Common myeloid progenitor, CD34-positive (primary cell): ENCODE measurements at regions of chr2 and their contacts with region 1.

Region 1: DNA sequence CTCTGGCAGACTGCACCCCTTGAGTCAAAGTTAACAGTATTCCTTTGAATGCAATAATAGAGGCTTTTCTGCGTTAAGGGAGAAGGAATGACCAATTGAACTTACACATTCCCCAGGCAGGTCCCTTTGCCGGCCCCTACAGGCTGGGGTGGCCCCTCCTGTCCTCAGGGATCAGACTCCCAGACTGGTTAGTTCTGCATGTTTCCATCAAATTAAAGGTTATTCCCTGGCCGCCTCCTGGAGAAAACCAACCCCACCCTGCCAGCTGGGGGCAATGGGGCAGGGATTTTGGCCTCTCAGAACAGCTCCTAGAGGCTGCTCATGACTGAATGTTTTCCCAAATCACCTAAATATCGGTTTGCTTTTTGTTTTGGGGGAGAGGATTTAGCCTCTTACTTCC is 199.6 kb downstream of the MGAT5 start:
- DNase-seq: no peak
- H3K4me3 ChIP-seq: no peak overlapping the region
- H3K27ac ChIP-seq: no peak overlapping the region
- H3K4me1 ChIP-seq: peaks cover 0 to 3% (median 2%) of the 10 kb centered on the region in 4 experiments
- H3K27me3 ChIP-seq: no peaks in the 10 kb centered on the region

Region 2: DNA sequence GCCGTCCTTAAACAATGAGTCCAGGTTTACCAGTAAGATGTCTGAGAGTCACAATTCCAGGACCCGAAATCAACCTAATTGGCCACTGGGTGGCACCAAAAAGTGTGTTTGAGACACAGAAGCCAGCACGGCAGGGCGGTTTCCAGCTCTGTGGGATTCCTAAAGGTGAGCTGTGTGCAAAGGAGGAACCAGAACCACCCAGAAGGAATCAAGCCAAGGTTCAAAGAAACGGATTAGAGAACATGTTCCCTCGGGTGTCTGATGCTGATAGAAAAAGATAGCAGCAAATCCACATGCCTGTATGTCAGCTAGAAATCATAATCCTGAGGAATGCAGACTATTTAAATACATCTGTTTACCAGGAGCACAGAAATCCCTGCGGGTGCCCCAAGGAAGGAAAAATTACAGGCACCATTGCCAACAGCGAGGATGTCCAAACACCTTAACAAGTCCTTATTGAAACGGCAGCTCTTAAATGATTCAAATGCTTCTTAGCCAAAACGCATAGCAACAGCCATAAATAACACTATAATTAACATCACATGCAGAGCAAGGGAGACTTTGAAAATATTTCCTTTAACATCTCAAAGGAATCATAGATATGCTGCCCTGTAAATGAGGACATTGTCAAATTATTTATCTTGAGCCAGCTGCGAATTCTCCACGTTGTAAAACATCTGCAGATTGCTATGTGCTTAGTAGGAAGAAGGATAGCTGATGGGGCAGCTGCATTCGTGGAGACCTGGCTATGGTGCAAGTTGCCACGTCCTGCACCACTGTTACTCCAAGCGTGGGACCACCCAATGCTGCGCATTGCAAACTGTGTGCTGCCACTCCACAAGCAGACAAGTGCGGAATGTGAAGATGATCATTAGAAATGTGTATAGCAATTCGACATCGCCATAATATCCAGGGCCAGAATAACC is 566.5 kb before region 1 on chr2:
- CTCF ChIA-PET with region 1: interaction called, 15 read pairs
- POLR2A ChIA-PET with region 1: no interaction called
- DNase-seq: peak; percentile 49 to 67 (median 63)
- H3K4me3 ChIP-seq: no peak overlapping the region
- H3K27ac ChIP-seq: no peak overlapping the region
- H3K4me1 ChIP-seq: no peaks in the 10 kb centered on the region
- H3K27me3 ChIP-seq: peaks cover 0 to 6% (median 2%) of the 10 kb centered on the region in 5 experiments

Region 3: DNA sequence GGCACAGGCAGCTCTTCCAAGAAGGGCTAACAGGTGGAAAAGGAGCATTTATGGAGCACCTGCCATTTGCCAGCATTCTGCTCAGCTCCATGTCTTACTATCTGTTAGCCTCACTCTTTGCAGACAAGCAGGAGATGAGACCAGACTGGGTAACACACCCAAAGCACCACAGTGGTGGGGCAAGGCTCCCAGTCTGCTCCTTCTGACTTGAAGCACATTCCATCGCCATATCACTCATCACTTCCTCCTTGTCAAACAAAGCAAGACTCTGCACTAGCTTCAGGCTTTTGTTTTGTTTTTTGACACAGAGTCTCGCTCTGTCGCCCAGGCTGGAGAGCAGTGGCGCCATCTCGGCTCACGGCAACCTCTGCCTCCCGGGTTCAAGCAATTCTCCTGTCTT is 16.8 kb before region 1 on chr2:
- CTCF ChIA-PET with region 1: interaction called, 11 read pairs
- POLR2A ChIA-PET with region 1: no interaction called
- DNase-seq: no peak
- H3K4me3 ChIP-seq: no peak overlapping the region
- H3K27ac ChIP-seq: no peak overlapping the region
- H3K4me1 ChIP-seq: peaks cover 0 to 5% (median 0%) of the 10 kb centered on the region in 4 experiments
- H3K27me3 ChIP-seq: no peaks in the 10 kb centered on the region

Region 4: GRCh38 chr2:134892282-134893070 is 439.0 kb after region 1 on chr2:
- CTCF ChIA-PET with region 1: interaction called, 12 read pairs
- POLR2A ChIA-PET with region 1: no interaction called
- DNase-seq: no peak
- H3K4me3 ChIP-seq: no peak overlapping the region
- H3K27ac ChIP-seq: no peak overlapping the region
- H3K4me1 ChIP-seq: no peaks in the 10 kb centered on the region
- H3K27me3 ChIP-seq: no peaks in the 10 kb centered on the region

Region 5: DNA sequence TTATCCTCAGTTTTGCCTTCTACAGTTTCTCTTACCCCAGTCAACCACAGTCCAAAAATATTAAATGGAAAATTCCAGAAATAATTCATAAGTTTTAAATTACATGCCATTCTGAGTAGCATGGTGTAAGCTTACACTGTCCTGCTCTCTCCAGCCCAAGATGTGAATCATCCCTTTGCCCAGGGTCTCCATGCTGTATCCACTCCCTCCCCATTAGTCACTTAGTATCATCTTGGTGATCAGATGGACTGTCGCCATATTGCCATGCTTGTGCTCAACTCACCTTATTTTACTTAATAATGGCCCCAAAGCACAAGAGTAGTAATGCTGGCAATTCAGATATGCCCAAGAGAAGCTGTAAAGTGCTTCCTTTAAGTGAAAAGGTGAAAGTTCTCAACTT is 446.7 kb after region 1 on chr2:
- CTCF ChIA-PET with region 1: interaction called, 14 read pairs
- POLR2A ChIA-PET with region 1: no interaction called
- DNase-seq: no peak
- H3K4me3 ChIP-seq: no peak overlapping the region
- H3K27ac ChIP-seq: no peak overlapping the region
- H3K4me1 ChIP-seq: peaks cover 0 to 2% (median 0%) of the 10 kb centered on the region in 4 experiments
- H3K27me3 ChIP-seq: no peaks in the 10 kb centered on the region